SK-N-SH (cell line): ENCODE measurements at regions of chr20 and their contacts with region 1.

Region 1: DNA sequence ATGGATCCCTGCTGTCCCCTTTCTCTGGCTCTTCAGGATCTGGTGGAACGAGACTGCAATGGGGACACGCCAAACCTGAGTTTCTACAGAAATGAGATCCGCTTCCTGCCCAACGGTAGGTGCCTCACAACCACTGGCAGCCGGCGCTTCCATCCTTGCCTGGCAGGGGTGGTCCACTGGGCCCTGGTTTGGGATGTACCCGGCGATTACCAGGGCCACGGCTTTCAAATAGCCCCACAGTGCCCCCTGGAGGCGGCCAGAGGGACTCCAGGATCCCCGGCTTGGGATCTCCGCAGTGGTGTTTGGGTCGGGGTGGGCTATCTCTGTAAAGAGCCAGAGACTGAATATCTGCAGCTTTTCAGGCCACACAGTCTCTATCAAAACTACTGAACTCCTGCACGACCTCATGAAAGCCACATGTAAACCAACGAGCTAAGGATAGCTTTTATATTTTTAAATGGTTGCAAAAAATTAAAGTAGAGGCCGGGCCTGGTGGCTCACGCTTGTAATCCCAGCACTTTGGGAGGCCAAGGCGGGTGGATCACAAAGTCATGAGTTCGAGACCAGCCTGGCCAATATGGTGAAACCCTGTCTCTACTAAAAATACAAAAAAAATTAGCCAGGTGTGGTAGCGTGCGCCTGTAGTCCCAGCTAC is 3.7 kb downstream of the OGFR start:
- DNase-seq: peak; percentile 93
- H3K4me3 ChIP-seq: peak overlapping the region in 1 of 2 experiments; percentile 44; a peak in 1 of 4 replicates
- H3K27ac ChIP-seq: no peak overlapping the region
- H3K4me1 ChIP-seq: peaks cover 10 to 27% of the 10 kb centered on the region in 2 experiments; a peak in 2 of 4 replicates
- H3K27me3 ChIP-seq: no peaks in the 10 kb centered on the region
- CTCF ChIP-seq: peak; percentile 93
- EP300 ChIP-seq: no peak
- RAD21 ChIP-seq: peak; percentile 74

Region 2: GRCh38 chr20:62787321-62787720 is 21.0 kb before region 1 on chr20:
- CTCF ChIA-PET with region 1: interaction called, 34 read pairs
- POLR2A ChIA-PET with region 1: no interaction called
- DNase-seq: no peak
- H3K4me3 ChIP-seq: no peak overlapping the region
- H3K27ac ChIP-seq: no peak overlapping the region
- H3K4me1 ChIP-seq: peaks cover 3 to 37% of the 10 kb centered on the region in 2 experiments; a peak in 2 of 4 replicates
- H3K27me3 ChIP-seq: no peaks in the 10 kb centered on the region
- CTCF ChIP-seq: no peak
- EP300 ChIP-seq: no peak
- RAD21 ChIP-seq: no peak

Region 3: DNA sequence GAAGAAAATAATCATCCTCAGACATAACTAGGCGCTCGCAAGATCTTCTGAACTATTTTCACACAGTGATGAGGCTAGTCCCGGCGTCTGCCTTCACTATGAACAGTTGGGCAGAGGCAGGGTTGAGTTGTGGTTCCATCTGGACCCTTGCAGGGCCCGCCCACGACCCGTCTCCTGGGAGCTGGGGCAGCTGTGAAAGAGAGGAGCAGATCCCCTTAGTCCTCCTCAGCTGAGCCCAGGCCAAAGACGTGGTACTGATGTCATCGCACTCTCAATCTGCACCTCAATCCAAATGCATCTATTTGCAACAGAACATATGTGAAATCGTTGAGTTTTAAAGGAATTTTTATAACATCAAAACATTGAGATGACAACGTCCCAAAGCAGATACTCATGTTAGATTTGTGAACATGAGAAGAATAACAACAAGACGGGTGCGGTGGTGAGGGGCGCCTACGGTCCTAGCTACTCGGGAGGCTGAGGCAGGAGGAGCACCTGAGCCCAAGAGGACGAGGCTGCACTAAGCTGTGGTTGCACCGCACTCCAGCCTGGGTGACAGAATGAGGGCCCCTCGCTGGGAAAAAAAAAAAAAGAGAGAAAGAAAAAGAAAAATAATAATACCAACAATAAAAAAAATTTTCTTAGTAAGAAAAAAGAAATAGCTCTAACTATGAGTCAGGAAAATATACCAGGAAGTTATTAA is 38.0 kb after region 1 on chr20:
- CTCF ChIA-PET with region 1: interaction called, 12 read pairs
- POLR2A ChIA-PET with region 1: no interaction called
- DNase-seq: no peak
- H3K4me3 ChIP-seq: no peak overlapping the region
- H3K27ac ChIP-seq: no peak overlapping the region
- H3K4me1 ChIP-seq: no peaks in the 10 kb centered on the region
- H3K27me3 ChIP-seq: no peaks in the 10 kb centered on the region
- CTCF ChIP-seq: no peak
- EP300 ChIP-seq: no peak
- RAD21 ChIP-seq: no peak